Activated CD4-positive, alpha-beta T cell treated with anti-CD3 and anti-CD28 coated beads for 36 hours (primary cell): ENCODE measurements at regions of chr11 and their contacts with region 1.

Region 1: GRCh38 chr11:94897330-94897768 is 76.0 kb downstream of the CWC15 start:
- DNase-seq: peak; percentile 62
- ATAC-seq: no peak
- H3K4me3 Mint-ChIP-seq: no peak overlapping the region
- H3K27ac Mint-ChIP-seq: no peak overlapping the region
- H3K4me1 Mint-ChIP-seq: no peaks in the 10 kb centered on the region
- H3K27me3 Mint-ChIP-seq: no peaks in the 10 kb centered on the region

Region 2: DNA sequence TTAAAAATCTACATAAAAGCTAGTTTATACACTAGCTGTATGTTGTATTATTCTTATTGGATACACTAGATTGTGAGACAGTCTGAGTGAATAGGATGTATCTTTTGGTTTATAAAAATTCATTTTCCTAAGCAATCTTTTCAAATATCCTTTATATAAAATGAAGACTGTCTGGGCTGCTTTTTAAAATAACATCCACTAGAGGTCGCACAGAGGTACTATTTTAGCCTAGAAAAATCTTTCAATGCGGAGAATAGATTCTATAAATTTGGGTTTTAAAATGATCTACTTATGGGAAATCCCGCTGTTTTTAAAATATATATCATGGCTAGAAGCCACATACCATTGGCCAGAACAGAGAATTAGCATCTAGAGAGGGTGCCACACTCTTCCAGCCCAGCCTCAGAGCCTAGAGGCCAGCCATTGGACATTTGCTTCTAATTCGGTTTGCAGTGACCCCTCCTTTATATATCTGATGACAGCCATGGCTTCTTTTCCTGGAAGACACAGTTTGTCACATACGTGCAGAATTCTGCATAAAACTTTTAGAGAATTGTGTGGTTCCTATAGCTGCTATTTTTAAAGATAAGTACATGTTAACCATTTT is 377.8 kb before region 1 on chr11:
- CTCF ChIA-PET with region 1: no interaction called
- POLR2A ChIA-PET with region 1: no interaction called
- intact Hi-C with region 1: loop called (anchors 1 to 2 kb)
- DNase-seq: no peak
- ATAC-seq: peak; percentile 30
- H3K4me3 Mint-ChIP-seq: no peak overlapping the region
- H3K27ac Mint-ChIP-seq: no peak overlapping the region
- H3K4me1 Mint-ChIP-seq: no peaks in the 10 kb centered on the region
- H3K27me3 Mint-ChIP-seq: peaks cover 12% of the 10 kb centered on the region

Region 3: GRCh38 chr11:94767761-94768601 is 129.4 kb before region 1 on chr11 and contains the start of gene AMOTL1:
- CTCF ChIA-PET with region 1: no interaction called
- POLR2A ChIA-PET with region 1: no interaction called
- intact Hi-C with region 1: loop called in 1 of 2 experiments (anchors 5 kb)
- DNase-seq: peak; percentile 69
- ATAC-seq: peak; percentile 73
- H3K4me3 Mint-ChIP-seq: peak within 1 kb of the TSS; percentile 65
- H3K27ac Mint-ChIP-seq: no peak within 1 kb of the TSS
- H3K4me1 Mint-ChIP-seq: peaks cover 11% of the 10 kb centered on the region
- H3K27me3 Mint-ChIP-seq: peaks cover 31% of the 10 kb centered on the region
- total RNA-seq, gene AMOTL1: 1.8 to 2.3 TPM

Region 4: GRCh38 chr11:94786264-94787126 is 110.9 kb before region 1 on chr11:
- CTCF ChIA-PET with region 1: interaction called, 13 read pairs
- POLR2A ChIA-PET with region 1: no interaction called
- intact Hi-C with region 1: loop called (anchors 1 kb)
- DNase-seq: no peak
- ATAC-seq: peak; percentile 42
- H3K4me3 Mint-ChIP-seq: no peak overlapping the region
- H3K27ac Mint-ChIP-seq: no peak overlapping the region
- H3K4me1 Mint-ChIP-seq: no peaks in the 10 kb centered on the region
- H3K27me3 Mint-ChIP-seq: peaks cover 8% of the 10 kb centered on the region

Region 5: DNA sequence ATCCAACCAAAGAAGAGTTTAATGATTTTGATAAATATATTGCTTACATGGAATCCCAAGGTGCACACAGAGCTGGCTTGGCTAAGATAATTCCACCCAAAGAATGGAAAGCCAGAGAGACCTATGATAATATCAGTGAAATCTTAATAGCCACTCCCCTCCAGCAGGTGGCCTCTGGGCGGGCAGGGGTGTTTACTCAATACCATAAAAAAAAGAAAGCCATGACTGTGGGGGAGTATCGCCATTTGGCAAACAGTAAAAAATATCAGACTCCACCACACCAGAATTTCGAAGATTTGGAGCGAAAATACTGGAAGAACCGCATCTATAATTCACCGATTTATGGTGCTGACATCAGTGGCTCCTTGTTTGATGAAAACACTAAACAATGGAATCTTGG is 100.1 kb after region 1 on chr11:
- CTCF ChIA-PET with region 1: no interaction called
- POLR2A ChIA-PET with region 1: no interaction called
- intact Hi-C with region 1: no loop called
- DNase-seq: no peak
- ATAC-seq: no peak
- H3K4me3 Mint-ChIP-seq: no peak overlapping the region
- H3K27ac Mint-ChIP-seq: no peak overlapping the region
- H3K4me1 Mint-ChIP-seq: no peaks in the 10 kb centered on the region
- H3K27me3 Mint-ChIP-seq: peaks cover 2% of the 10 kb centered on the region

Region 6: DNA sequence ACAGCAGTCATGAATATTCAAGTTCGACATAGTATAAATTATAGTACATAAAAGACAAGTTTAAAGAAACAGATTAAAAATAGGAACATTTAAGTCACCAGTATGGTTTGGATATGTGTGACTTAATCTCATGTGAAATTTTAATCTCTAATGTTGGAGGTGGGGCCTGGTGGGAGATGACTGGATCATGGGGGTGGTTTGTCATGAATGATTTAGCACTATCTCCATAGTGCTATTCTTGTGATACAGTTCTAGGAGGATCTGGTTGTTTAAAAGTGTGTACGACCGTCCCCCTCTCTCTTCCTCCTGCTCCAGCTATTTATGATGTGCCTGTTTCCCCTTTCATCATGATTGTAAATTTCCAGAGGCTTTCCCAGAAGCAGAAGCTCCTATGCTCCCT is 131.0 kb after region 1 on chr11:
- CTCF ChIA-PET with region 1: no interaction called
- POLR2A ChIA-PET with region 1: no interaction called
- intact Hi-C with region 1: no loop called
- DNase-seq: no peak
- ATAC-seq: no peak
- H3K4me3 Mint-ChIP-seq: no peak overlapping the region
- H3K27ac Mint-ChIP-seq: no peak overlapping the region
- H3K4me1 Mint-ChIP-seq: no peaks in the 10 kb centered on the region
- H3K27me3 Mint-ChIP-seq: no peaks in the 10 kb centered on the region